ENCODE measurements at regions of chr4 and their contacts with region 1.

Region 1: GRCh38 chr4:139734875-139735380 is 69.3 kb downstream of the MGST2 start:
- DNase-seq: peak; percentile 93 to 95 (median 95)
- H3K4me3 ChIP-seq: peak overlapping the region; percentile 37
- H3K27ac ChIP-seq: peak overlapping the region; percentile 80 to 83
- H3K4me1 ChIP-seq: peaks cover 10% of the 10 kb centered on the region
- H3K27me3 ChIP-seq: no peaks in the 10 kb centered on the region
- CTCF ChIP-seq: peak; percentile 81 to 89 (median 86)
- EP300 ChIP-seq: no peak
- POLR2A ChIP-seq: peak; percentile 51

Region 2: DNA sequence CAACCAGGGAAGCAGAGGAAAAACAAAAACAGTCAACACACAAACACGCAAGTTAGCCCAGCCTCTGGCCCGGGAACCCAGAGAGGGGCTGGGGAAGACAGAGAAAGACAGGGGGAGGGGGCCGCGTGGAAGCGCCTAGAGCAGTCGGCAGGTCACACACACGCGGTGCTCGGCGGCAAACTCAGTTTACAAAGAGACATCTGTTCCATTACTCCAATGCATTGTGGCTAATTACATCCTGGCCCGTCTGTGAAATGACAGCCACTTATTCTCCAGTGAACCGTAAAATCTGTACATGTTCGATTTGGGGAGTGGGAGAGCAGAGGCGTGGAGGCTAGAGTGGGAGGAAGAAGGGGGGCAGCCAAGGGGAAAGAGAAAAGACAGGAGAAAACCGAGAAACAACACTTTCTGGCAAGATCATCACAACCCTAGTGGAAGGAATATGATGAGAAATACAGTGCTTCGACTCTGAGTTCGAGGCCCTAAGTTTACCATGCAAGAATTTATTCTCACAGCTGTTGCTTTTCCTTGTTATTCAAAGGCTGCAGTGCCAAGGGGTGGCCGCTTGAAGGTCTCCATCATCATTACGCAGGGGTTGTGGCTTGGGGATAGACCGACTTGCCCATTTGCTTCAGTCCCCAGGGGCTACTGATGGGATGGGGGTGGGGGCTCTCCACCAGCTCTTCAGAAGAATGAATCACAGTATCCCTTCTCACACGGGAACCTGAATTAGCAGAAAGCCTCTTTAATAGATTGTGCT is 98.4 kb after region 1 on chr4:
- intact Hi-C with region 1: no loop called
- DNase-seq: no peak
- H3K4me3 ChIP-seq: no peak overlapping the region
- H3K27ac ChIP-seq: no peak overlapping the region
- H3K4me1 ChIP-seq: peaks cover 2% of the 10 kb centered on the region
- H3K27me3 ChIP-seq: no peaks in the 10 kb centered on the region
- CTCF ChIP-seq: no peak
- EP300 ChIP-seq: no peak
- POLR2A ChIP-seq: no peak

Region 3: GRCh38 chr4:139901531-139902320 is 166.8 kb after region 1 on chr4:
- intact Hi-C with region 1: loop called in 1 of 4 experiments (anchors 10 kb)
- DNase-seq: no peak
- H3K4me3 ChIP-seq: peak overlapping the region; percentile 20
- H3K27ac ChIP-seq: peak overlapping the region in 1 of 2 donors; percentile 59
- H3K4me1 ChIP-seq: peaks cover 4% of the 10 kb centered on the region
- H3K27me3 ChIP-seq: no peaks in the 10 kb centered on the region
- CTCF ChIP-seq: no peak
- EP300 ChIP-seq: no peak
- POLR2A ChIP-seq: no peak

Region 4: GRCh38 chr4:139913398-139913990 is 178.6 kb after region 1 on chr4:
- intact Hi-C with region 1: loop called in 2 of 4 experiments (anchors 5 to 10 kb)
- DNase-seq: peak; percentile 46 to 70 (median 51)
- H3K4me3 ChIP-seq: no peak overlapping the region
- H3K27ac ChIP-seq: peak overlapping the region in 1 of 2 donors; percentile 75
- H3K4me1 ChIP-seq: peaks cover 27% of the 10 kb centered on the region
- H3K27me3 ChIP-seq: no peaks in the 10 kb centered on the region
- CTCF ChIP-seq: no peak
- EP300 ChIP-seq: no peak
- POLR2A ChIP-seq: no peak

Region 5: DNA sequence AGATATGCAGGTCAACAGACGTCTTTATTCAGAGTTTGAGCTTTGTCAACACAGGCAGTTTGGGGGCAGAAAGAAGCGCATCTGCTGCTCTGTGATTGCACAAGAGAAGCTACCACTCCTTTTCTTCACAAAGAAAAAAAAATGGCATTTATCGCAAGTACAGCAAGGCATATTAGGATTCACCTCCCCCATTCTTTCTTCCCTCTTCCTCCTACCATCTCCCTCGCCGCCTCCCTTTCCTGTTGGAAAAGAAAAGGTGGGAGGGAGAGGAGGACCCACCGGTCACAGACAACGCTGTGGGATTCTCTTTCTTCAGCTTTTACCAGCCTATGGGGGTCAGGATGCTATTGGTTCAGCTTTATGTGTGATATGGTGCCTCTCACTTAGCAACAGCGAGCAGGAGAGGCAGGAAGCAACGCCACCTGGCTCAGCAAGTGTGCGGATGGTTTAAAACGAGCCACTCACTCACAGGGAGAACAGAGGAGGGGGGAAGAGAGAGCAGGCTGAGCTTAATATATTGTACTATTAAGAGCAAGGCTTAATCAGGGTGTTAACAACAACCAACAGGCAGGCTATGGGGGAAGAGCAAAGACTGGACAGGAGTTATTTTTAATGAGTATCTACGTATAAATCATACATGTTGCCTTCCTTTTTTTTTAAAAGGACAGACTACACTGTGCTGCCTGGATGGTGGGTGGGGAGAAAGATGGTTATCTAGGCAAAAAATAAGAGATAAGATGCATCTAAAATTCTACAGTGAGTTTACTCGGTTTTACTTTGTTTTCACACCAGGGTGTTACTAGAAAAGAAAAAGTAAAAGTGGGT is 314.3 kb after region 1 on chr4:
- intact Hi-C with region 1: loop called in 1 of 4 experiments (anchors 10 kb)
- DNase-seq: peak; percentile 68 to 78 (median 68)
- H3K4me3 ChIP-seq: peak overlapping the region; percentile 17
- H3K27ac ChIP-seq: peak overlapping the region; percentile 62 to 85
- H3K4me1 ChIP-seq: peaks cover 5% of the 10 kb centered on the region
- H3K27me3 ChIP-seq: no peaks in the 10 kb centered on the region
- CTCF ChIP-seq: no peak
- EP300 ChIP-seq: no peak
- POLR2A ChIP-seq: no peak

Region 6: GRCh38 chr4:140326395-140326993 is 591.6 kb after region 1 on chr4:
- intact Hi-C with region 1: loop called in 2 of 4 experiments (anchors 5 to 10 kb)
- DNase-seq: peak in 3 of 5 donors; percentile 19 to 49 (median 25)
- H3K4me3 ChIP-seq: no peak overlapping the region
- H3K27ac ChIP-seq: no peak overlapping the region
- H3K4me1 ChIP-seq: no peaks in the 10 kb centered on the region
- H3K27me3 ChIP-seq: no peaks in the 10 kb centered on the region
- CTCF ChIP-seq: peak; percentile 35 to 70 (median 69)
- EP300 ChIP-seq: no peak
- POLR2A ChIP-seq: no peak

Region 7: DNA sequence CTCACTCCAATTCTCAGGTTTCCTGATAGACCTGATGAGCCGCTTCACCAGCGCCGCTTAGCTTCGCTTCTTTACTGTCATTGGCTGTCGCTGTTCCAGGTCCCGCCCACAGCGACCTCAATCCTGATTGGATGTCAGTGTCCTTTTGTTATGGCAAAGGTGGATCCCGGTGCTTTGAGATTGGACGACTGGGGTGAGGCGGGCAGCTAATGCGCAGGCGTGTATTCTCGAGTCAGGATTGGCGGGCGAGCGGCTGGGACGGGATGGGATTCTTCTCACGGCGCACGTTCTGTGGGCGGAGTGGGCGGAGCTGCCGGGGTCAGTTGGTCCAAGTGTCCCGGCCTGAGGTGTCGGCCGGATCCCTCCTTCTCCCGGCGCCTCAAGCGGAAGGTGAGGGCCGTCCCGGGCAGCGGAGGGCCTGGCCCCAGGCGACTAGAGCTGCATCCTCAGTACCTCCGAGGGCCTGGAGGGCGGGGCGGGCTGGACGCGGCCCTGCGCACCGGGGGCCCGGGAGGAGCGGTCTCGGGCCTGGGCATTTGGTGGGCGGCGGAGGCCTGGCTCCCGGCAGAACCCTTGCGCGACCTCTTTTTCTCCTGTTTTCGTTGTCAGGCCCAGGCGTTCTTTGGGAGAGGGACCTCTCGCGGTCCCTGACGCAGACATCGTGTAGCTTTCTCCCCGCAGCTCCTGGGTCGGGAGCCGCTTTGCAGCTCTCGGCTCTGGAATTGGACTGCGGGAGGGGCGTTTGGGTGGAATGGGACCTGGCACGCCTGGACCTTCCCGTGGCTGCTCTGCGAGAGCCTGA is 638.6 kb after region 1 on chr4 and contains the start of gene SCOC:
- intact Hi-C with region 1: loop called in 1 of 4 experiments (anchors 10 kb)
- DNase-seq: peak; percentile 98 to 99 (median 99)
- H3K4me3 ChIP-seq: peak within 1 kb of the TSS; percentile 60
- H3K27ac ChIP-seq: peak within 1 kb of the TSS; percentile 74 to 91
- H3K4me1 ChIP-seq: peaks cover 1% of the 10 kb centered on the region
- H3K27me3 ChIP-seq: no peaks in the 10 kb centered on the region
- CTCF ChIP-seq: no peak
- EP300 ChIP-seq: no peak
- POLR2A ChIP-seq: peak; percentile 57
- total RNA-seq, gene SCOC: 32.4 to 48.0 (median 43.4) TPM